ENCODE measurements at regions of chr6 and their contacts with region 1.

Region 1: GRCh38 chr6:127120787-127121636 is 2.5 kb downstream of the RSPO3 start:
- DNase-seq: no peak
- H3K4me3 ChIP-seq: peak overlapping the region; percentile 79 to 93 (median 86)
- H3K27ac ChIP-seq: peak overlapping the region; percentile 88 to 92 (median 88)
- H3K4me1 ChIP-seq: peaks cover 22 to 76% (median 52%) of the 10 kb centered on the region in 4 donors
- H3K27me3 ChIP-seq: peaks cover 0 to 22% (median 2%) of the 10 kb centered on the region in 4 donors
- CTCF ChIP-seq: peak; percentile 72 to 83 (median 74)
- EP300 ChIP-seq: no peak
- POLR2A ChIP-seq: no peak

Region 2: DNA sequence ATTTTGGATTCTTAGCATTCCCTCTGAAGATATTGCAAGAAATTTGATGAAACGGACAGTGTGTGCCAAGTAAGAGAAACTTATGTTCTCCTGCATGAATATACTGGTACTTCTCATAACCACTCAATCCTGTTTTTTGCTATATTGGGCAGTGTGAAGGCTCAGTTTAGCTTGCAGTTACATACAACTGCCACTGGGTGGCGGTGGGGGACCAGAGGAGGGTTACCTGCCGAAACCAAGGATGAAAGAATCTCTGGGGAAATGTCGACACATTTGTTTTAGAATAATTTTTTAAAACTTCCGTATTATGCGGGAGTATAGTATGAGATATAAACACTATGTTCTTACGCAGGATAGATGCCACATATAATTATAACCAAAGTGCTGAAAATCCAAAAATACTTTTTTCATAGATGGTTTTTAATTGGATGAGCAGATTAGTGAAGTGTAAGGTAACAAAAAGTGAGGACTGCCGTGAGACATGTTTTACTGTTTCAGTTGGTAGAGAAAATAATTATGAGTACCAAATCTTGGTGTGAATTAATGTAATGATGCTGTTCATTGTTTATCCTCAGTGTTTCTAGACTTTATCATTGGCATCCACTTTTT is 1124.9 kb before region 1 on chr6:
- intact Hi-C with region 1: loop called (anchors 10 kb)
- DNase-seq: no peak
- H3K4me3 ChIP-seq: peak overlapping the region in 3 of 4 donors; percentile 16 to 34 (median 16)
- H3K27ac ChIP-seq: no peak overlapping the region
- H3K4me1 ChIP-seq: peaks cover 0 to 32% (median 20%) of the 10 kb centered on the region in 4 donors
- H3K27me3 ChIP-seq: no peaks in the 10 kb centered on the region
- CTCF ChIP-seq: peak in 2 of 3 experiments; percentile 93 to 95
- EP300 ChIP-seq: no peak
- POLR2A ChIP-seq: no peak

Region 3: DNA sequence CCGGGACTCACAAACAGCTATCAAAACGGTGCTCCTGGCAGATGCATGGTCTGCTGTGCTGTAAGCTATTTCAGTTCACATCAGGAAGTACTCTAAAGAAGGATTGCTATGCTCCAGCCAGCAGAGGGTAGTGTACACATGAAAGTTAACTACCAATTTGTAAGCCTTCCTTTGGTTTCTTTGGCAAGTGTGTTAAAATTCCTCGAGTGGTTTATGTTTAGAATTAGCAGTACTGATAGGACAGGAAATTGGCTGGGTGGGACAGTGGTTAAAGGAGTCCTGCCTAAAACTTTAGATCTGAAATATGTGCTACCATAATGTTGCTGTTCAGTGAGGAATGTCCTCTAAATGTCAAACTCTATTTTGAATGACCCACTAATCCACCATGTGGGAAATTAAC is 1087.3 kb before region 1 on chr6:
- intact Hi-C with region 1: loop called (anchors 10 kb)
- DNase-seq: no peak
- H3K4me3 ChIP-seq: no peak overlapping the region
- H3K27ac ChIP-seq: peak overlapping the region in 1 of 4 donors; percentile 1
- H3K4me1 ChIP-seq: peaks cover 5 to 45% (median 35%) of the 10 kb centered on the region in 4 donors
- H3K27me3 ChIP-seq: no peaks in the 10 kb centered on the region
- CTCF ChIP-seq: peak; percentile 63 to 68 (median 68)
- EP300 ChIP-seq: no peak
- POLR2A ChIP-seq: no peak

Region 4: DNA sequence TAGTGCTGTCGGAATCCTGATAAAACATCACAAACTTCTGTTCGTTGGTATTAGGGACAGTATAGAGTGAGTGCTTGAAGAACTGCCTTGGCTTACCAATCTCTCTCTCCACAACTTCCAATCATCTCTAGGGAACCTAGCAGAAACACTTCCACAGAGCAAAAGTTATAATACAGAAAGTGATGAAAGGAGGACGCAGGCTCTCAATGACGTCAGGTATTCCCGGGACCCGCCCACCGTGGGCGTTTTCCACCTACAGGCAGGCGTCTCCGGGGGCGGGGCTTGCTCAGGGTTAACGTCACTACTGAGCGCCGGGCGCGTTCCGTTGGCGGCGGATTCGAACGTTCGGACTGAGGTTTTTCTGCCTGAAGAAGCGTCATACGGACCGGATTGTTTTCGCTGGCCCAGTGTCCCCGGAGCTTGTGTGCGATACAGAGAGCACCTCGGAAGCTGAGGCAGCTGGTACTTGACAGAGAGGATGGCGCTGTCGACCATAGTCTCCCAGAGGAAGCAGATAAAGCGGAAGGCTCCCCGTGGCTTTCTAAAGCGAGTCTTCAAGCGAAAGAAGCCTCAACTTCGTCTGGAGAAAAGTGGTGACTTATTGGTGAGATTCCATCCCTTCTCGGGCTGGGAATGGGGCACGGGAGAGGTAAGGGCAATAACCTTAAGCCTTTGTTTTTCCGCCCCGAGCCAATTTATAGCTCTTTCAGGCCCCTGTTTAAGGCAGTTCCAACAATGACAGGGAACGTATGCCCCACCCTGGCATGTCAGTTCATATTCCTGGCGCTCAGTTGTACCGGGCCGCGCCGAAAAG is 781.0 kb before region 1 on chr6 and contains the start of gene CENPW:
- intact Hi-C with region 1: loop called (anchors 5 kb)
- DNase-seq: peak; percentile 99
- H3K4me3 ChIP-seq: peak within 1 kb of the TSS; percentile 58 to 72 (median 65)
- H3K27ac ChIP-seq: peak within 1 kb of the TSS; percentile 36 to 74 (median 57)
- H3K4me1 ChIP-seq: peaks cover 5 to 16% (median 13%) of the 10 kb centered on the region in 4 donors
- H3K27me3 ChIP-seq: no peaks in the 10 kb centered on the region
- CTCF ChIP-seq: no peak
- EP300 ChIP-seq: no peak
- POLR2A ChIP-seq: no peak
- total RNA-seq, gene CENPW: 0.83 to 4.2 (median 1.7) TPM in 3 of 4 donors, not detected in the other

Region 5: GRCh38 chr6:126361832-126362412 is 759.1 kb before region 1 on chr6:
- intact Hi-C with region 1: loop called (anchors 10 kb)
- DNase-seq: no peak
- H3K4me3 ChIP-seq: no peak overlapping the region
- H3K27ac ChIP-seq: no peak overlapping the region
- H3K4me1 ChIP-seq: no peaks in the 10 kb centered on the region
- H3K27me3 ChIP-seq: no peaks in the 10 kb centered on the region
- CTCF ChIP-seq: no peak
- EP300 ChIP-seq: no peak
- POLR2A ChIP-seq: no peak

Region 6: GRCh38 chr6:126661646-126662045 is 459.4 kb before region 1 on chr6:
- intact Hi-C with region 1: loop called (anchors 10 kb)
- DNase-seq: no peak
- H3K4me3 ChIP-seq: no peak overlapping the region
- H3K27ac ChIP-seq: peak overlapping the region; percentile 70 to 78 (median 72)
- H3K4me1 ChIP-seq: peaks cover 0 to 69% (median 62%) of the 10 kb centered on the region in 4 donors
- H3K27me3 ChIP-seq: no peaks in the 10 kb centered on the region
- CTCF ChIP-seq: no peak
- EP300 ChIP-seq: no peak
- POLR2A ChIP-seq: no peak

Region 7: DNA sequence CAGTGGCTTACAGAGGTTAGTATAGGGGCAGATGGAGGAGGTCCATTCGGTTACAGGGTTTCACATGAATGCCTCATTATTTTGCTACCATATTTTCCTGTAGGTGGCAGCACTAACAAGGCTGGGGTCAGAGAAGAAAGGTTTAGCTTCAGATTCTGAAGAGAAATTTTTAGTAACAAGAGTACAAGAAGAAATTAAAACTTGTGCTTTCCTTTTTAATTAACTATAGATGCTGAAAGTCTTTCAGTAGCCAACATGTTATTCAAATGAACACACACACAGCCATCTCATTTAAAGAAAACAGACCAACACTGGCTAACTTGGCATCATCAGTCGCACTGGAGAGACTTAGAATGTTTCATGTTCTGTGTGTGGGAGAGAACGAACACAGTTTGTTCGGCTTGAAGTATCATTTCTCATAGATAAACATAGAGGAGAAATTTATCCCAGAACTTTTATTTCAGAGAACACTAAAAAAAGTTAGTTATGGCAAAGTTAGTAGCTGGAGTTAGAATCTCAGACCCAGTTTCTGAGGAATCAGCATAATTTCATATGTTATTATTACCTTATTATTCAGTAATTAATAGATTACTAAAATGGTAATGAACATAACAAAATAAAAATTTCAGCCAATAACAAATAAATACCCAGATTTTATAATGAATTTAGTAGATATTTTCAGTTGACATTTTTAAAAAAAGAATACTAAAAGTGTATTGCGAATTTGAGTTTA is 316.5 kb before region 1 on chr6:
- intact Hi-C with region 1: loop called (anchors 5 kb)
- DNase-seq: no peak
- H3K4me3 ChIP-seq: no peak overlapping the region
- H3K27ac ChIP-seq: peak overlapping the region in 1 of 4 donors; percentile 12
- H3K4me1 ChIP-seq: peaks cover 0 to 8% (median 8%) of the 10 kb centered on the region in 4 donors
- H3K27me3 ChIP-seq: no peaks in the 10 kb centered on the region
- CTCF ChIP-seq: peak; percentile 51 to 77 (median 66)
- EP300 ChIP-seq: no peak
- POLR2A ChIP-seq: no peak